Colonic mucosa (tissue), 4 donors: ENCODE measurements at regions of chr9 and their contacts with region 1.

Region 1: GRCh38 chr9:126500684-126501382 is 112.9 kb upstream of the LMX1B start:
- DNase-seq: peak; percentile 63
- H3K4me3 ChIP-seq: no peak overlapping the region
- H3K27ac ChIP-seq: no peak overlapping the region
- H3K4me1 ChIP-seq: peaks cover 5% of the 10 kb centered on the region
- H3K27me3 ChIP-seq: peaks cover 4% of the 10 kb centered on the region
- CTCF ChIP-seq: peak; percentile 97

Region 2: DNA sequence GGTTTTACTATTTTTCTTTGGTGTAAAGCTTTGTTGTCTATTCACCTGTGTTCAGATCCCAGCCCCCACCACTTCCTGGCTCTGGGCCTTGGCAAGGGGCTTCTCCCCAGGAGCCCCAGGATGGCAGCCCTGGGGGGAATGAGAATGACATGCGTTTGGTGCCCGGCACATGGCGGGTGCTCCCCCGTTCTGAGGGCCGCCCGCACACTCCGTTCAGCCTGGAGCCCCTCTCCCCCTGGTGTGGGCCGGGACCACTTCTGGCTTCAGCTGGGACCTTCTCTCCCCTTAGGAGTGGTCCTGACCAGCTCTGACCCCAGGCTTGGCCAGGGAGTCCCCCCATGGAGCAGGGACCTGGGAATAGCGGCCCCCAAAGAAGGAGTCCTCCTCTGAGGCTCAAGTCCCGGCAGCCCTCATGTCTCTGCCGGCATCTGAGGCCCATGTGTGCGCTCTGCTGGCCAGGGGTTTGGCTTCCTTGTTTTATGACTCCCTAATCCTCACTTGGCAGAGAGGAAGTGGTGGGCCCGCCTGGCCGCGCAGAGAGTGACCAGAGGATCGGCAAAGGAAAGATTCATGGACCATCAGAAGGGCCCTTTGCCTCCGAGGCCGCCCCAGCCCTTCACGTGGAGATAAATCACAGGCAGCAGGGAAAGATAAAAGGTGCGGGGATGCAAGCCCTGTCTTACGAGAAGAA is 55.9 kb after region 1 on chr9:
- intact Hi-C with region 1: loop called (anchors 2 kb)
- DNase-seq: no peak
- H3K4me3 ChIP-seq: no peak overlapping the region
- H3K27ac ChIP-seq: no peak overlapping the region
- H3K4me1 ChIP-seq: no peaks in the 10 kb centered on the region
- H3K27me3 ChIP-seq: no peaks in the 10 kb centered on the region
- CTCF ChIP-seq: no peak

Region 3: DNA sequence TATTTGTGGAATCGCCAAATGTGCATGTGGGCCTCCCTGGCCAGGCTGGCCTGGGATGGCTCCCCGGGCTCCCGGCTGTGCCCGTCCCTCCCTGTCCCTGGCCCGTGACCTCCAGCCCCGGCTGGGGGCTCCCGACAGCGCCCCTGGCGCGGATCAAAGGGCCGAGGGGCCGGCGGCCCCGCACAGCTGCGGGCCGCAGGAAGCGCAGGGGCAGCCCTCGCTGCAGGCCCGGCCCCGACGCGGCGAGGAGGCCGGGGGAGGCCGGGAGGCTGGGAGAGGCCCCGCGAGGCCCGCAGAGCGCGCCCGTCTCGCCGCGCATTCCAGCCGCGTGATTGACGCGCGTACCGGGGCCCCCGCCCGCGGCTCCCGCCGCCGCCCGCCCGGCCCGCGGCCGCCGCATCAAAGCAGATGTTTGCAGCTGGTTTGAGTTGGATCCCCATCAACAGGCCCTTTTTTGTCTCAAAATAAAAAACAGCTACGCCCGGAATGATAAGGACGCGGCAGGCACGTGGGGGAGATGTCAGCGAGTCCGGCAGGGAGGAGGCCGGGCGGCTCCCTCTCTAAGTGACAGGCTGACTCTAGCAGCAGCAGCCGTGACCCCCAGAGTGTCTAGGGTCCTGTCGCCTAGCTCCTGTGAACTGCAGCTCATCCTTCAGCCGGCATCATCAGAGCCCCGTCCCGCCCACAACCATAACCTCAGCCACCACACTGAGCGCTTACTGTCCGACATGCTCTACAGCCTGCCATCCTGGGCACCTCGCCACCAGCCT is 182.3 kb after region 1 on chr9:
- intact Hi-C with region 1: no loop called
- DNase-seq: no peak
- H3K4me3 ChIP-seq: no peak overlapping the region
- H3K27ac ChIP-seq: no peak overlapping the region
- H3K4me1 ChIP-seq: no peaks in the 10 kb centered on the region
- H3K27me3 ChIP-seq: peaks cover 53% of the 10 kb centered on the region
- CTCF ChIP-seq: no peak